GM23248 (cell line): ENCODE measurements at regions of chr19 and their contacts with region 1.

Region 1: DNA sequence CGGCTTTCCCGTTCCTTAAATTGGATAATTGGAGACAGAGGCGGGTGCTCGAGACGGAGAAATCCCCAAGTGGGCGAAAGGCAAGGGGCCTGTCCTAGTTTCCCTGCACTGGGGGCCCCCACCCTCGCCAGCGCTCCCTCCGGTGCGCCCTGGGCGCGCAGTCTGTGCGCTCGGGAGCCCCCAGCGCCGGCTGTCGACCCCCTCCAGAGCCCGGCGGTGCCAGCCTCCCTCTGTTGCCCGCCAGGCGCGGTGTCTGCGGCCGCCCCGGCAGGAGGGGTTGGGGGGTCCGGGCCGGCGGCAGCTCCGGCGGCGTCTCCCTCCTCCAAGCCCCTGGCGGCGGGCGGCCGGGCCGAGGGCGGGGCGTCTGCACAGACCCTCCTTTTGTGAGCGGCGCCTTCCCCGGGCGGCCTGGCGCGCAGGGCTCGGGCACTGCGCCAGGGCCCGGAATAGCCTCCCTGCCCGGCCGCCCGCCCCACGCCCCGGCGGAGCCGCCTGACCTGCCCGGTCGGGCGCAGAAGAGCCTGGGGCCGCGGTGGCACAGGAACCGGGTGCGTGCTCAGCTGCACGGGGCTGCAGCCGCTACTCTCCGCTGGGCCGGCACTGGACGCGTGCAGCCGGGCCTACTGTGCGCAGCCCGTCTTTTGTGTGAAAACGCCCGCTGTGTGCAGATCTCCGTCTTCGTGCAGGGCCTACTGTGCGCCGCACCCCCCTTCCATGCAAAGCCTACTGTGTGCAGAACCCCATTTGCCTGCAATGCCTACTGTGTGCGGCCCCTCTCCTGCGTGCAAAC is 13.2 kb downstream of the GADD45B start:
- DNase-seq: peak; percentile 82
- H3K4me3 ChIP-seq: peak overlapping the region; percentile 62
- H3K27ac ChIP-seq: peak overlapping the region; percentile 2; the same call in 1 of the 2 replicates
- H3K4me1 ChIP-seq: peaks cover 15% of the 10 kb centered on the region
- H3K27me3 ChIP-seq: no peaks in the 10 kb centered on the region

Region 2: DNA sequence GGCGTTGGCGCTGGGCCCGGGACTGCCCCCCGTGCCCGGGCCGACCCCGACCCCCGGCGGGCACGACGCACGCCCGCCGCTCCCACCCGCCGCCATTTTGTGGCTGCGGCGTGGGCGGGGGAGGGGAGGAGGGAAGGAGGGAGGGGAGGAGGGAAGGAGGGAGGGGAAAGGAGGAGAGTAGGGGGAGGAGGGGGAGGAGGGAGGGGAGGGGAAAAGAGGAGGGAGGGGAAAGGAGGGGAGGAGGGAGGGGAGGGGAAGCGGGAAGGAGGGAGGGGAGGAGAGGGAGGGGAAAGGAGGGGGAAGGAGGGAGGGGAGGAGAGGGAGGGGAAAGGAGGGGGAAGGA is 473.6 kb before region 1 on chr19 and contains the start of gene BTBD2:
- in situ Hi-C with region 1: no loop called
- DNase-seq: peak; percentile 72
- H3K4me3 ChIP-seq: peak within 1 kb of the TSS; percentile 74
- H3K27ac ChIP-seq: no peak within 1 kb of the TSS
- H3K4me1 ChIP-seq: no peaks in the 10 kb centered on the region
- H3K27me3 ChIP-seq: no peaks in the 10 kb centered on the region
- total RNA-seq, gene BTBD2: 69.5 and 72.0 TPM in 2 replicates

Region 3: GRCh38 chr19:2537584-2538433 is 48.7 kb after region 1 on chr19:
- in situ Hi-C with region 1: loop called (anchors 5 kb)
- DNase-seq: no peak
- H3K4me3 ChIP-seq: no peak overlapping the region
- H3K27ac ChIP-seq: no peak overlapping the region
- H3K4me1 ChIP-seq: peaks cover 30% of the 10 kb centered on the region
- H3K27me3 ChIP-seq: no peaks in the 10 kb centered on the region

Region 4: GRCh38 chr19:2588081-2588777 is 99.1 kb after region 1 on chr19:
- in situ Hi-C with region 1: loop called (anchors 10 kb)
- DNase-seq: peak; percentile 57
- H3K4me3 ChIP-seq: no peak overlapping the region
- H3K27ac ChIP-seq: no peak overlapping the region
- H3K4me1 ChIP-seq: no peaks in the 10 kb centered on the region
- H3K27me3 ChIP-seq: no peaks in the 10 kb centered on the region

Region 5: GRCh38 chr19:2759362-2759761 is 270.2 kb after region 1 on chr19:
- in situ Hi-C with region 1: no loop called
- DNase-seq: no peak
- H3K4me3 ChIP-seq: no peak overlapping the region
- H3K27ac ChIP-seq: no peak overlapping the region
- H3K4me1 ChIP-seq: no peaks in the 10 kb centered on the region
- H3K27me3 ChIP-seq: no peaks in the 10 kb centered on the region

Region 6: GRCh38 chr19:2923510-2923909 is 434.4 kb after region 1 on chr19:
- in situ Hi-C with region 1: no loop called
- DNase-seq: peak; percentile 84
- H3K4me3 ChIP-seq: no peak overlapping the region
- H3K27ac ChIP-seq: peak overlapping the region; percentile 50
- H3K4me1 ChIP-seq: peaks cover 9% of the 10 kb centered on the region; the same call in 1 of the 2 replicates
- H3K27me3 ChIP-seq: no peaks in the 10 kb centered on the region